ENCODE measurements at regions of chr1 and their contacts with region 1.

Region 1: DNA sequence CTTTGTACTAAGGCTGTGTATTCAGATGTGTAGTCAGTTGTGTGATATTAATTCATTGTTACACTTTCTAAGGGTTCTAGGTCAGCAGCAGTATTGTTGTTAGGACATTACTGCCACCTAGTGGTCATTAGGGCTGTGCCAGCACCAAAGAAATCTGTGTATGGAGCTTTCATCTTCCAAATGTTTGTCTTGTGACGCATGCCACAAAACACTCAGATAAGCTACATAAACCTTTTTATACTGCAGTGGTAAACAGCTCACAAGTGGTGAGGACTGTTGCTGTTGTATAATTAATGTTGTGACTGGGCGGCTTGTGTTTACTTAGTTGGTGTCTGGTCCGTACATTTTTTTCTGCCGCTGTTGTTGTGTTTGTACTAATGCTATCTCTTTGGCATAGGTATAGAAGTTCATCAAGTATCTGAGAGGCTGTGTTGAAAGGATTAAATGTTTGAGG is 51.7 kb downstream of the S1PR1 start:
- DNase-seq: peak; percentile 84
- H3K4me3 Mint-ChIP-seq: no peak overlapping the region
- H3K27ac Mint-ChIP-seq: peak overlapping the region; percentile 72
- H3K4me1 Mint-ChIP-seq: peaks cover 84% of the 10 kb centered on the region
- H3K27me3 Mint-ChIP-seq: no peaks in the 10 kb centered on the region

Region 2: GRCh38 chr1:100377590-100378361 is 910.7 kb before region 1 on chr1:
- CTCF ChIA-PET with region 1: no interaction called
- intact Hi-C with region 1: loop called (anchors 5 kb)
- DNase-seq: no peak
- H3K4me3 Mint-ChIP-seq: no peak overlapping the region
- H3K27ac Mint-ChIP-seq: peak overlapping the region; percentile 71
- H3K4me1 Mint-ChIP-seq: peaks cover 60% of the 10 kb centered on the region
- H3K27me3 Mint-ChIP-seq: no peaks in the 10 kb centered on the region

Region 3: DNA sequence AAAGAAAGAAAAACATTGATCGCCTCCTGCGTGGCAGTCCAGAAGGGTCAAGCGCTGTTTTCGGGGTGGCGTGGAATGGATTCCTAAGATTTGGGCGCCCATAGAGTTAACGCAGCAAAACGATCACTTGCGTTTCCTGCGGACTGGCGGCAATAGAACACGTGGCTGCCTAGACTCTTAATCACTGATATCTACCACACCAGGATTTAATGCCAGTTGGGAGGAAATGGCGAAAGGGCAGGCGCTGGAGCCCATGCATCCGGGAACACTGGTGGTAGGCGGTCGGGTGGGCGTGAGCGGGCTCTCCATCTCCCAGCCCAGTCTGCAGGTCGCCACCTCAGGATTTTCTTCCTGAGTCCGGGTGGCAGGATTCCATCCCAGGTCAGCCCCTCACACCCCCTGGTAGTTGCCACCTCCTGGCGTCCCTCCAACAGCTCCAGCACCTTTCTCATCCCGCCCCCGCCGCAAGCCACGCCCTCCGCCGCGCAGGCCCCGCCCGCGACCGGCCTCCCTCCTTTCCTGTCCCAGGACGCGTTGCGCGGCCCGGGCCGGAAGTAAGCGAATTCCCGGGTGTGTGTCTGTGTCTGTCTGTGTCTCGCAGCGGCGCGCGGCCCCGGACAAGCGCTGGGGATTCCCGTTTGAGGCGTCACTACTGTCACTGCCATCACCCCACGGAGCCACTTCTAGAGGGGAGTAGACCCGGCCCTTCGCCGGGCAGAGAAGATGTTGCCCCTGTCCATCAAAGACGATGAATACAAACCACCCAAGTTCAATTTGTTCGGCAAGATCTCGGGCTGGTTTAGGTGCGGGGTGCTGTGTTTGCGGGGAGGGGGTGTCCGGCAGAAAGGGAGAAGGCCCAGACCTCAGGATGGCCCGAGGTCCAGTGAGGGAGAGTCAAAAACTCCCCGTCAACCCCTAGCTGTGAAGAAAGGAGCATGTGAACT is 392.7 kb before region 1 on chr1 and contains the start of gene SLC30A7:
- CTCF ChIA-PET with region 1: interaction called, 7 read pairs
- intact Hi-C with region 1: loop called (anchors 1 kb)
- DNase-seq: peak; percentile 98
- H3K4me3 Mint-ChIP-seq: peak within 1 kb of the TSS; percentile 100
- H3K27ac Mint-ChIP-seq: peak within 1 kb of the TSS; percentile 100
- H3K4me1 Mint-ChIP-seq: peaks cover 37% of the 10 kb centered on the region
- H3K27me3 Mint-ChIP-seq: no peaks in the 10 kb centered on the region
- total RNA-seq, gene SLC30A7: 32.4 to 32.6 TPM

Region 4: DNA sequence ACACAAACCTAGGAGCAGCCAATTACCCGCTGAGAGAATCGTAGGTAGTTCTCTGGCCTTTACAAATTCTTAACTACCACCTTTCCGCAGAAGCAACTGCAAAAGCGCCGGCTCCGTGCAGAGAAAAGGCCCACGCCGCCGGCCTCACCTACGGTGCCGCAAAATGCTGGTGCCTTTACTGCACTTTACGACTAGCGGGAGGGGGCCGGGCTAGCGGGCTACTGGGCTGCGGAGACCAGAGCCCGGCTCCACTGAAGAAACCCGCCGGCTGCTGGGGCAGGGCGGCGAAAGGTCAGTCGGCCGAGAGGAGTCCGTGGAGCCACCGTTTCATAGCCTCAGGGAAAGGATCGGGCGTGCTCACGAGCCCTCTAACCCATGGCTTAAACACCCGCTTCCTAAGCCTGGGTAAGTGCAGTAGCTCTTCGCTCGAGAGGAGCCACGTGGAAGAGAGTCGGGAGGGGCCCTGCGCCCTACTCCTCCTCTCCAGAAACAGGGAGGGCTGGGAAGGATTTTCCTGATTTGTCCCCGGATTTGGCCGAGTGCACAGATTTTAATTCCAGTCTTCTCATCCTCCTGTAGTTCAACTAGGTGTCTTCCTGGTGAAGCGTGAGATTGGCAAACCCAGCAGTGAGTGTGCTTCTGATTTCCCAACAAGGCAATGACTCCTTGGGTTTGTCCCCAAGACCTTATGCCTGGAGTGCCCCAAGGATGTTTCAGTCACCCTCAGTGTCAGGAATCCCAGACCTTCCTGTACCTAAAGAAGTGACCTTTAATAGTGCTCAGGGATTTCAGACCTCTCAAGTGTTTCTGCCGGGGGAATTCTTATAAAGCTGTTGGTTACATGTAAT is 262.6 kb before region 1 on chr1 and contains the start of gene DPH5:
- CTCF ChIA-PET with region 1: interaction called, 6 read pairs
- intact Hi-C with region 1: loop called (anchors 1 kb)
- DNase-seq: peak; percentile 92
- H3K4me3 Mint-ChIP-seq: peak within 1 kb of the TSS; percentile 99
- H3K27ac Mint-ChIP-seq: peak within 1 kb of the TSS; percentile 98
- H3K4me1 Mint-ChIP-seq: peaks cover 58% of the 10 kb centered on the region
- H3K27me3 Mint-ChIP-seq: no peaks in the 10 kb centered on the region
- total RNA-seq, gene DPH5: 61.7 to 66.3 TPM

Region 5: DNA sequence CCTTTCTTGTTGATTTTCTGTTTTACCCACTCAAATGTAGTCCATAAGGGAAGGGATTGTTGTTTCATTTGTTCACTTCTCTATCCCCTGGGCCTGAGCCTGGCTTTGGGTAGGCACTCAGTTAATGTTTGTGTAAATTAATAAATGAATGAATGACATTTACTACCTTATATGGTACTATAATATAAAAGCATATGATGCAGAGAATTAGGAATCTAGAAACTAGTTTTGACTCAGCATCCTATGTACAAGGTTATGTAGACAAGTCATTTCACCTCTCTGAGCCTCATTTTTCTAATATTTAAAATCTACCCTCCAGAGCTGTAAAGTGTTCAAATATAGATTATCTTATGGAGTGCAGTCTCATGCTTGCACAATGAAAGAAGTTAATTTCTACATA is 120.6 kb before region 1 on chr1:
- CTCF ChIA-PET with region 1: interaction called, 7 read pairs
- intact Hi-C with region 1: loop called (anchors 1 kb)
- DNase-seq: no peak
- H3K4me3 Mint-ChIP-seq: no peak overlapping the region
- H3K27ac Mint-ChIP-seq: peak overlapping the region; percentile 43
- H3K4me1 Mint-ChIP-seq: peaks cover 41% of the 10 kb centered on the region
- H3K27me3 Mint-ChIP-seq: no peaks in the 10 kb centered on the region

Region 6: GRCh38 chr1:101259744-101260148 is 28.8 kb before region 1 on chr1:
- CTCF ChIA-PET with region 1: interaction called, 18 read pairs
- intact Hi-C with region 1: loop called (anchors 1 kb)
- DNase-seq: no peak
- H3K4me3 Mint-ChIP-seq: no peak overlapping the region
- H3K27ac Mint-ChIP-seq: peak overlapping the region; percentile 77
- H3K4me1 Mint-ChIP-seq: peaks cover 67% of the 10 kb centered on the region
- H3K27me3 Mint-ChIP-seq: no peaks in the 10 kb centered on the region

Measured in activated naive CD4-positive, alpha-beta T cell treated with anti-CD3 and anti-CD28 coated beads for 36 hours (primary cell).